Mucosa of descending colon (tissue), 3 donors: ENCODE measurements at regions of chr2 and their contacts with region 1.

Region 1: DNA sequence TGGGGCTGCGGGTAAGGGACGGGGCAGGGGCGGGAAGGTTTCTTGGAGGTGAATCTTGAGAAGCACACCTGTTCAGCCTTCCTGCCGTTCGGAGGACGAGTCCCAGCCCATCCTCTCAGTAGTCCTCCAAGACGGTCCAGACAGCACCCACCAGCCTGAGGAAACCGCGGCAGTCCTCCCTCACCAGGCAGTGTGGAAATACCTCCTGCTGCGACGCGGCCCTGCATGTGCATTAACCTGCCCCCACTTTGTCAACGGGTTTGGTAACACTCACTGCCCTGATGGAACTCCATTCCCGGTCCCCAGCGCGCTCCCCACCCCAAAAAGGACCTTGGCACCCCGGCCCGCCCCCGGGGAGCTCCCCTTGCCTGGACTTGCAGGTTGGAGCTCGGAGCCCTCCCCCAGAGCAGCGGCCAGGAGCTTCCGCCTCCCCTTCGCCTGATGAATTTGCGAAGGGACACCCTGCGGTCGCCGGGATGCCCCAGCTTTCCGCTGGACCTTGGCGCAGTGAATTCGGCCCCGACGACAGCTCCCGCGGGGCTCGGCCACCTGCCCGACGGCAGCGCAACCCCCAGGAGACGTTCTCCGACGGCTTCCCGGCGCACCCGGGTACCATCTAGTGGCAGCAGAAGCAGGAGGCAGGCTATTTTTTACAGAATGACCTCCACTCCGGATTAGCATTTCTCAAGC is 31.5 kb downstream of the ACVR1C start:
- DNase-seq: no peak
- ATAC-seq: no peak
- H3K4me3 ChIP-seq: no peak overlapping the region
- H3K4me1 ChIP-seq: no peaks in the 10 kb centered on the region
- CTCF ChIP-seq: no peak

Region 2: DNA sequence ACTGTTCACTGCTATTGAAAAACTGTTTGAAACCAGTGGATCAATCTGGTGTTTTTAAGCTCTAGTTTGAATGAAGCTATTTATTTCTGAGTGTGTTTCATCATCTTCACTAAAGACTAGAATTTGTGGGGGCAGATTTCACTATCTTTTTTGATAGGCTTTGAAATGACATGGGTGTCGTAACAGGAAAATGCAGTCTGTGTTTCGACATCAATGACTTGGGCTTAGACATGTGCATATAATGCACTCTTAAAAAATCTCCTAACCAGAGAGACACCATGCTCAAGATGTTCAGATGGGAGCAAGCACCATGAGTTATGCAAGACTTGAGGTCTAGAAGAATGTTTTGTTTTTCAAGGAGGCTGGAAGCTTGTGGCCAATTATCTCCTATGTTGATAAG is 939.3 kb before region 1 on chr2:
- intact Hi-C with region 1: no loop called
- DNase-seq: no peak
- ATAC-seq: no peak
- H3K4me3 ChIP-seq: no peak overlapping the region
- H3K4me1 ChIP-seq: no peaks in the 10 kb centered on the region
- CTCF ChIP-seq: no peak

Region 3: GRCh38 chr2:157492189-157492773 is 104.9 kb before region 1 on chr2:
- intact Hi-C with region 1: loop called in 1 of 2 experiments (anchors 10 kb)
- DNase-seq: peak; percentile 53 to 80 (median 66)
- ATAC-seq: peak; percentile 65
- H3K4me3 ChIP-seq: no peak overlapping the region
- H3K4me1 ChIP-seq: peaks cover 10% of the 10 kb centered on the region
- CTCF ChIP-seq: peak; percentile 50